Psoas muscle (tissue), 8 donors: ENCODE measurements at regions of chr1 and their contacts with region 1.

Region 1: DNA sequence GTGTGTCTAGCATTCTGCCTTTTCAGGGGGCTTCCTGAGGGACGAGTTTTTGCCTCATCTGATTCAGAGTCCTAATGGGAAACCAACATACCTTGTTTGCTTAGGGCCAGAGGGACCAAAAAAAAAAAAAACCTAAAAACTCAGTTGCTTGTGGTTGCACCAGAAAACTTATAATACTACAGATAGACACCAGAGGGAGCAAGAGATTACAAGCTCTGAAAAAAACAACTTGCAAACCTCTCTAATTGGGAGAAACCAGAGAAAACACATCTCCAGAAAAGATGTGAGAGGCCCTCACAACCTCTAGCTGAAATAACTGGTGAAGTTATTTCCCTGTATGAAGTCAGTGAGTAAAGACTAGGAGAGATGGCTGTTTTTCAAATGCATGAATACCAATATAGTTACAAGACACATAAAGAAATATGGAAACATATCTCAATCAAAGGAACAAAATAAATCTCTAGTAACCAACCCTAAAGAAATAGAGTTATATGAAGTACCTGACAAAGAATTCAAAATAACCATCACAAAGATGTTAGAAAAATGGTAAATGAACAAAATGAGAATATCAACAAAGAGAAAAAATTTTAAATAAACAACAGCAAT is 233.7 kb upstream of the NFIA start:
- DNase-seq: no peak
- ATAC-seq: no peak
- H3K4me3 ChIP-seq: no peak overlapping the region
- H3K27ac ChIP-seq: no peak overlapping the region
- H3K4me1 ChIP-seq: no peaks in the 10 kb centered on the region
- H3K27me3 ChIP-seq: no peaks in the 10 kb centered on the region
- CTCF ChIP-seq: peak; percentile 58

Region 2: GRCh38 chr1:61851849-61852669 is 1003.4 kb after region 1 on chr1:
- intact Hi-C with region 1: loop called in 1 of 2 experiments (anchors 10 kb)
- DNase-seq: no peak
- ATAC-seq: peak; percentile 47 to 88 (median 68)
- H3K4me3 ChIP-seq: no peak overlapping the region
- H3K27ac ChIP-seq: no peak overlapping the region
- H3K4me1 ChIP-seq: peaks cover 5% of the 10 kb centered on the region
- H3K27me3 ChIP-seq: no peaks in the 10 kb centered on the region
- CTCF ChIP-seq: peak; percentile 73